ENCODE measurements at regions of chr4 and their contacts with region 1.

Region 1: DNA sequence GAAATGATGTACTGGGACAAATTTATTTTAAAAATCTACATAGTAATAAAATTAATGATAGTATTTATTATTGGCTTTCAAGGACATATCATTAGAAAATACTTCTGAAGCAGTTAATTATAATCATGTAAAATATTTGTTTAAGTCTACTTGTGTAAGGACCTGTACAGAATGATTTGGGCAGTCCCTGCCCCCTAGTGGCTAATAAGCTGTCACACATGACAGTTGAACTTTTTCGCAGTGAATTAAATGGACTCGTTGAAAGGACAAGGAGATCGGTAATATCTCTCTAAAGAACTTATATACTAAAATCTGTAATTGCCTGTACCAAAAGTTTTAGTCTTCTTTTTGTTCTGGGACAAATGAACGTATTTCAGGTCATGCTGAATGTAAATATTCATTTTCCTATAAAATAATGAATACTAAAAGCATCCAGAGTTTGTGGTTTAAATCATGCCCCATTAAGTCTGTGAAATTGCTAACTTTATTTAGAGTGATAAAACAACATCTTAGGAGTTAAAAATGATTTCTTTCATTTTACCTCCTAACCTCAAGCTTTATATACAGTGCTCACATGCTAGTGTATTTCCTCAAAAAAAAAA is 13.6 kb downstream of the EXOC1 start:
- DNase-seq: peak; percentile 47

Region 2: GRCh38 chr4:55853484-55854046 is 13.5 kb before region 1 on chr4 and contains the start of gene EXOC1:
- CTCF ChIA-PET with region 1: no interaction called
- POLR2A ChIA-PET with region 1: interaction called, 11 read pairs
- DNase-seq: peak; percentile 94

Region 3: GRCh38 chr4:55948726-55949474 is 81.8 kb after region 1 on chr4 and contains the start of gene CEP135:
- CTCF ChIA-PET with region 1: interaction called, 11 read pairs
- POLR2A ChIA-PET with region 1: no interaction called
- DNase-seq: peak; percentile 95

Region 4: GRCh38 chr4:55993994-55994663 is 127.1 kb after region 1 on chr4:
- CTCF ChIA-PET with region 1: no interaction called
- POLR2A ChIA-PET with region 1: no interaction called
- DNase-seq: no peak